H1 (cell line): ENCODE measurements at regions of chr15 and their contacts with region 1.

Region 1: GRCh38 chr15:77526791-77527778 is 105.6 kb downstream of the LINGO1 start:
- DNase-seq: no peak
- H3K4me3 ChIP-seq: no peak overlapping the region; a peak in 1 of 8 replicates
- H3K27ac ChIP-seq: no peak overlapping the region
- H3K4me1 ChIP-seq: peaks cover 0 to 28% (median 6%) of the 10 kb centered on the region in 4 experiments; a peak in 6 of 7 replicates
- H3K27me3 ChIP-seq: no peaks in the 10 kb centered on the region; a peak in 1 of 7 replicates
- CTCF ChIP-seq: no peak
- EP300 ChIP-seq: no peak
- POLR2A ChIP-seq: no peak
- RAD21 ChIP-seq: no peak

Region 2: DNA sequence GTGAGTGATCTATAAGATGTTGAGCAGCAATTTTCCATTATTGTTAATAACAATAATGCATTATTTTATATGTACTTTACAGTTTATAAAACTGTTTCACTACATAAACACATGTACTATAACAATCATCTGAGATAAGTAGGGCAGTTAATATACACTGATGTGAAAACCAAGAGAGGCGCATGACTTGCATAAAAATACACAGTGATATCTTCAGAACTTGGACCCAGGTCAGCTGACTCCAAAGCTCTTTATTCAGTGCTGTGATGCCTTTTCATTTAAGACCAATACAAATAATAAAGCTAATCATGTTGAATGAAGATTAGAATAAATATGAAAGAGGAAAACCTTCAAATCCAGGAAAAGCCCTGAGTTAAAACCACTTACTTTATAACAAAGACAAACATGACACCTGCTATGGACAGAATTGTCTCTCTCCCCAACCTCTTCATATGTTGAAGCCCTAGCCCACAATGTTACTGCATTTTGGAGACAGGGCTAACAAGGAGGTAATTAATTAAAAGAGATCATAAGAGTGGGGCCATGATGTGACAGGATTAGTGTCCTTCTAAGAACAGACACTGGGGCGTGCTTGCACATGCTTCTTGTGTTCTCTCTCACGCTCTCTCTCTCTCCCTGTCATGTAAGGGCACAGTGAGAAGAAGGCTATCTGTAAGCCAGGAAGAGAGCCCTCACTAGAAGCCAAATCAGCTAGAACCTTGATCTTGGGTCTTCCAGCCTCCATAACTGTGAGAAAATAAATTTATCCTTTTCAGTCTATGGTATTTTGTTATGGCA is 400.4 kb before region 1 on chr15:
- CTCF ChIA-PET with region 1: no interaction called
- POLR2A ChIA-PET with region 1: no interaction called
- DNase-seq: no peak
- H3K4me3 ChIP-seq: no peak overlapping the region
- H3K27ac ChIP-seq: no peak overlapping the region
- H3K4me1 ChIP-seq: peaks cover 0 to 12% (median 0%) of the 10 kb centered on the region in 4 experiments; a peak in 1 of 7 replicates
- H3K27me3 ChIP-seq: no peaks in the 10 kb centered on the region
- CTCF ChIP-seq: no peak
- EP300 ChIP-seq: no peak
- POLR2A ChIP-seq: no peak
- RAD21 ChIP-seq: no peak

Region 3: GRCh38 chr15:77461486-77461885 is 65.6 kb before region 1 on chr15:
- CTCF ChIA-PET with region 1: no interaction called
- POLR2A ChIA-PET with region 1: no interaction called
- DNase-seq: no peak
- H3K4me3 ChIP-seq: no peak overlapping the region
- H3K27ac ChIP-seq: no peak overlapping the region
- H3K4me1 ChIP-seq: peaks cover 0 to 4% (median under 1%) of the 10 kb centered on the region in 4 experiments; a peak in 2 of 7 replicates
- H3K27me3 ChIP-seq: peaks cover 0 to under 1% (median 0%) of the 10 kb centered on the region in 4 experiments; a peak in 1 of 7 replicates
- CTCF ChIP-seq: no peak
- EP300 ChIP-seq: no peak
- POLR2A ChIP-seq: no peak
- RAD21 ChIP-seq: no peak

Region 4: DNA sequence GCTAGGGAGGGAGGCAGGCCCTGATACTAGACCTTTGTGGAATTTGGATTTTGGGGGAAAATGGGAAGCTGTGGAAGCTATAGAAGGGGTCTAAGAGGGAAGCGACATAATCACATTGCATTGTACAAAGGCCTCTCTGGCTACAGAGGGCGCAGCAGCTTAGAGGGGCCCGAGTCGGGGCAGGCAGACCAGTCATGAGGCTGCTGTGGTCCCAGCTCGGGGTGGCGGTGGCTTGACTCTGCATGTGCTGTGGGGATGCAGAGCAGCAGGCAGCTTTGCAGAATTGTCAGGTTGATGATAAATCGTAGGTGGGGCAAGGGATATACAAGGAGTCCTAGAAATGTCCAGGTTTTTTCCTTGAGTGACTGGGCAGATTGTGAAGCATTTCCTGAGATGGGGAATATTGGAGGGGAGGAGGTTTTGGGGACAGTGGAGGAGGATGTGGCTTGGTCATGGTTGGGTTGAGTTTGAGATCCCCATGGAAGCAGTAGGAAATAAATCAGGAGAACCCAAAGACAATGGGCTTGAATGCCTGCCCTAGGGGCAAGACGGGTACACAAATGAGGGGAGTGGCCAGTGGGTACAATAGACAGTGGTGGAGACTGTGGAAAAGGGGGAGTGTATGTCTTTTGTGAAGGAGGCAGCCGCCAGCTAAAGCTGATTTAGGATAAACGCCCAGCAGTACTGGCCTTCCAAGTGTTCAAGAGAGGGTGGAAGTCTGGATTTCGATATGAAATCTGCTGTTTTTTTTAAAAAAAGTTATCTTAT is 12.3 kb before region 1 on chr15:
- CTCF ChIA-PET with region 1: interaction called, 29 read pairs
- POLR2A ChIA-PET with region 1: interaction called, 4 read pairs
- DNase-seq: no peak
- H3K4me3 ChIP-seq: no peak overlapping the region
- H3K27ac ChIP-seq: no peak overlapping the region
- H3K4me1 ChIP-seq: peaks cover 8 to 17% (median 12%) of the 10 kb centered on the region in 4 experiments
- H3K27me3 ChIP-seq: no peaks in the 10 kb centered on the region
- CTCF ChIP-seq: peak in 2 of 3 experiments; percentile 22 to 41; a peak in 2 of 4 replicates
- EP300 ChIP-seq: no peak
- POLR2A ChIP-seq: no peak
- RAD21 ChIP-seq: peak in 1 of 2 experiments; percentile 28; a peak in 1 of 4 replicates

Region 5: GRCh38 chr15:77538027-77538451 is 11.0 kb after region 1 on chr15:
- CTCF ChIA-PET with region 1: interaction called, 49 read pairs
- POLR2A ChIA-PET with region 1: interaction called, 9 read pairs
- DNase-seq: no peak
- H3K4me3 ChIP-seq: no peak overlapping the region
- H3K27ac ChIP-seq: no peak overlapping the region
- H3K4me1 ChIP-seq: peaks cover 12 to 37% (median 16%) of the 10 kb centered on the region in 4 experiments
- H3K27me3 ChIP-seq: no peaks in the 10 kb centered on the region
- CTCF ChIP-seq: no peak
- EP300 ChIP-seq: no peak
- POLR2A ChIP-seq: no peak
- RAD21 ChIP-seq: no peak

Region 6: DNA sequence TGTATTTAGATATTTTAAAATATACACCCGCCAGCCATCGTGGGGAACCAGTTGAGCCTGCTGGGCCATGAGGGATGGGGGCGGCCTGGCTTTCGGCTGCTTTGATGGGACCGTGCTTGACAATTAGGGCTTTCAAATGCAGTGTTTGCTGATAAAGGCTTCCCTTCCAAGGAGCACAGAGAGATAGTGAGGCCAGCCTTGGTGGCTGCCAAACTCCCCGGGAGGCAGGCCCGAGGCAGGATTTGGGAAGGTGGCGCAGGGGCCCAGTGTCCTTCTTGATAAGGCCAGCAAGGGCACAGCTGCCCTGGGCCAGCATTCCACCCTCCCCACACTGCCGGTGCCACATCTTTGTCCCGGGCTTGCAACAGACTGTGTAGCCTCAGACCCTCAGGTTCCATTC is 30.1 kb after region 1 on chr15:
- CTCF ChIA-PET with region 1: no interaction called
- POLR2A ChIA-PET with region 1: no interaction called
- DNase-seq: no peak
- H3K4me3 ChIP-seq: no peak overlapping the region
- H3K27ac ChIP-seq: no peak overlapping the region
- H3K4me1 ChIP-seq: peaks cover 0 to 9% (median 5%) of the 10 kb centered on the region in 4 experiments; a peak in 6 of 7 replicates
- H3K27me3 ChIP-seq: no peaks in the 10 kb centered on the region
- CTCF ChIP-seq: no peak
- EP300 ChIP-seq: no peak
- POLR2A ChIP-seq: no peak
- RAD21 ChIP-seq: no peak

Region 7: GRCh38 chr15:77568973-77569728 is 42.1 kb after region 1 on chr15:
- CTCF ChIA-PET with region 1: no interaction called
- POLR2A ChIA-PET with region 1: no interaction called
- DNase-seq: no peak
- H3K4me3 ChIP-seq: no peak overlapping the region
- H3K27ac ChIP-seq: no peak overlapping the region
- H3K4me1 ChIP-seq: peaks cover 0 to 17% (median 11%) of the 10 kb centered on the region in 4 experiments; a peak in 6 of 7 replicates
- H3K27me3 ChIP-seq: no peaks in the 10 kb centered on the region
- CTCF ChIP-seq: no peak
- EP300 ChIP-seq: no peak
- POLR2A ChIP-seq: no peak
- RAD21 ChIP-seq: no peak